H1 (cell line): ENCODE measurements at regions of chr3 and their contacts with region 1.

Region 1: DNA sequence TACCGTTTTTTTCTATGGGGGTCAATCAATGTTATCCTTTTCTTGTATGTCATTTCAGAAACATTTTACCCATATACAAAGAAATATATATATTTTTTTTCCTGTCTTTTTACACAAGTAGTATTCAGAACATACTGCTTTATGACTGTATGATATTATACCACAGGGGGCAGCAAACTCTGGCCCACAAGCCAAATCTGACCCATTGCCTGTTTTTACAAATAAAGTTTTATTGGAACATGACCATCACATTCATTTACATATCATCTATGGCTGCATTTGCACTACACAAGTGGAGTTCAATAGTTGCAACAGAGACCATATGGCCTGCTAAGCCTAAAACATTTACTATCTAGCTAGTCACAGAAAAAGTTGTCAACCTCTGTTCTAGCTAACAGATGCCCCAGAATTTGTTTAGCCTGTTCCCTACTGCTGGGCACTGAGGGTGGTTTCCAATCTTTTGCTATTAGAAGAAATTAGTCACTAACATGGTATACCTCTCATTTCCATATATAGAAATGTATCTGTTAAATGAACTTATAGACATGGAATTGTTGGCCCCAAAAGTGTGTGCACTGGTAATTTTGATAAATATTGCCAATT is 57.7 kb downstream of the BFSP2 start:
- DNase-seq: no peak
- H3K4me3 ChIP-seq: no peak overlapping the region
- H3K27ac ChIP-seq: no peak overlapping the region
- H3K4me1 ChIP-seq: peaks cover 0 to 10% (median 3%) of the 10 kb centered on the region in 4 experiments; a peak in 2 of 7 replicates
- H3K27me3 ChIP-seq: no peaks in the 10 kb centered on the region
- CTCF ChIP-seq: peak in 2 of 3 experiments; percentile 16 to 25; a peak in 2 of 4 replicates
- EP300 ChIP-seq: no peak
- POLR2A ChIP-seq: no peak
- RAD21 ChIP-seq: peak; percentile 15 to 23; a peak in 2 of 4 replicates

Region 2: DNA sequence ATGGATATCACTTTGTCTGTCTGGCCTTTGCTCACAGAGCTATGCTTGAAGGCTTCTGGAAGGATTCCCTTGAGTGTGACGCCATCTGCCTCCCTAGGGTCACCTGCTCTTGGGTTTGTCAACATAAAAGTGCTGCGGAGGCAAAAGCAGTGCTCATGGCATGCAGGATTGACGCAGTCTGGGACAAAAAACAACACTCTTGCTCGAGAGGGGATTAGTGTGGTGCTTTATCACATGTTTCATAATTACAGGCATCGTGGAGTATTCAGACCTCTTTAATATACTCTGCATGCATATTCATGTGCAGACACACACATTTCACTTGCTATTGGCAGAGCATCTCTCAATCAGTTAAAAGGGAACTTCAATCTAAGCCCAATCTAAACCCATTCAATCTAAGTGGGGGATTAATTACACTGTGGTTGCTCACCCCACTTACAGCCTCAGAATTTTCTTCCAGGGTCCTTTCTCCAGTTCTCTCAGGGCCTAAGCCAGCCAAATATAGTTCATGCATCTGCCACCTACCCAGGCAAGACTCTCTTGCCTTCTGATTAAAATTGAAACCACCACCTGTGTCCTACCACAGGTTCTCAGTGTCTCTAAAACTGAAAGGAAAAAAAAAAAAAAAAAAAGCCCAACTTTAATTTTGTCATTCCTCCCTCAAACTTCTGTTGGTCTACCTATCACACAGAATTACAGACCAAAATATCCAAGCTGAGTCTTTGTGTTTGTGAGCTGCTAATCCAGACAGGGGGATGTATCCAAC is 17.9 kb after region 1 on chr3:
- CTCF ChIA-PET with region 1: interaction called, 11 read pairs
- POLR2A ChIA-PET with region 1: no interaction called
- DNase-seq: no peak
- H3K4me3 ChIP-seq: no peak overlapping the region
- H3K27ac ChIP-seq: no peak overlapping the region
- H3K4me1 ChIP-seq: peaks cover 0 to 12% (median 6%) of the 10 kb centered on the region in 4 experiments; a peak in 5 of 7 replicates
- H3K27me3 ChIP-seq: peaks cover 0 to 5% (median 0%) of the 10 kb centered on the region in 4 experiments; a peak in 4 of 7 replicates
- CTCF ChIP-seq: no peak
- EP300 ChIP-seq: no peak
- POLR2A ChIP-seq: no peak
- RAD21 ChIP-seq: no peak

Region 3: GRCh38 chr3:133722935-133723334 is 265.4 kb after region 1 on chr3:
- CTCF ChIA-PET with region 1: no interaction called
- POLR2A ChIA-PET with region 1: no interaction called
- DNase-seq: no peak
- H3K4me3 ChIP-seq: no peak overlapping the region
- H3K27ac ChIP-seq: no peak overlapping the region
- H3K4me1 ChIP-seq: no peaks in the 10 kb centered on the region
- H3K27me3 ChIP-seq: no peaks in the 10 kb centered on the region
- CTCF ChIP-seq: no peak
- EP300 ChIP-seq: no peak
- POLR2A ChIP-seq: no peak
- RAD21 ChIP-seq: no peak